ENCODE measurements at regions of chr12 and their contacts with region 1.

Region 1: GRCh38 chr12:3885277-3886094 is 12.3 kb upstream of the PARP11 start:
- DNase-seq: no peak
- ATAC-seq: peak in 1 of 4 donors; percentile 55
- H3K4me3 ChIP-seq: peak overlapping the region; percentile 33
- H3K27ac ChIP-seq: peak overlapping the region; percentile 5
- H3K4me1 ChIP-seq: no peaks in the 10 kb centered on the region
- H3K27me3 ChIP-seq: peaks cover 0 to 4% (median 3%) of the 10 kb centered on the region in 3 donors
- CTCF ChIP-seq: peak; percentile 81

Region 2: GRCh38 chr12:3832738-3833137 is 52.7 kb before region 1 on chr12:
- intact Hi-C with region 1: no loop called
- DNase-seq: no peak
- ATAC-seq: no peak
- H3K4me3 ChIP-seq: no peak overlapping the region
- H3K27ac ChIP-seq: no peak overlapping the region
- H3K4me1 ChIP-seq: no peaks in the 10 kb centered on the region
- H3K27me3 ChIP-seq: no peaks in the 10 kb centered on the region
- CTCF ChIP-seq: no peak

Region 3: DNA sequence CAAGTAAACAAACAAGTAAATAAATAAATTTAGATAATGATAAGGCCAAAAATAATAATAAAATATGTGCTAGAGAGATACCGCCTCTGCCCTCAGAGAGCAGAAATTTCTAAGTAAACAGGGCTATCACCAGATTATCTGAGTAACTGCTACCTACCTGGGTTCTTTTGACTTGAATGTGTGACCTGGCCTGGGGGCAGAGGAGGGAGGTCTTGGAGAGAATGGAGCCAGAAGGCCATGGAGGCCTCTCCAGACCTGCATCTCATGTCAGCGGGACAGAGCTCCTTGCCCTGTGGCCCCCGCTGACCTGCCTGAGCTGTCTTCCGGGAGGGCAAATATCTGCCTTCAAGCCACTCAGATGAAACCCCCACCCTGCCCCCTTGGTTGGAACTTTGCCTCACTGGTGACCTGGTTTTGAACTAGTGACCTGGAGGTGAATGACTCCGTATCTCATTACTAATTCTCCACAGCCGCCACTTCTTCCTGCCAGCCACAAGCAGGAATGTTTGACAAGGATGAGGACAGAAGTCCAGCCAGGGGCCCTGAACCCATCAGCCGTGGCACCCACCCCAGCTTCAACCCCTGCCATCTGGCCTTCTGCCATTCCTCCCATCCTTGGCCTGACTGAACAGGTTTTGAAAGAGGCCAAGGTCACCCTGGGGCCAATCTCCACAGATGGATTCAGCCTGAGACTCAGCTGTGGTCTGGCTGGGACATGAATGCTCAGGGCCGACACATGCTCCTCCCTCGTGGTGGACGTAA is 74.5 kb after region 1 on chr12:
- intact Hi-C with region 1: no loop called
- DNase-seq: no peak
- ATAC-seq: no peak
- H3K4me3 ChIP-seq: no peak overlapping the region
- H3K27ac ChIP-seq: no peak overlapping the region
- H3K4me1 ChIP-seq: no peaks in the 10 kb centered on the region
- H3K27me3 ChIP-seq: peaks cover 0 to 10% (median 3%) of the 10 kb centered on the region in 3 donors
- CTCF ChIP-seq: no peak

Region 4: GRCh38 chr12:4037747-4038312 is 152.3 kb after region 1 on chr12:
- intact Hi-C with region 1: loop called (anchors 2 to 5 kb)
- DNase-seq: no peak
- ATAC-seq: no peak
- H3K4me3 ChIP-seq: no peak overlapping the region
- H3K27ac ChIP-seq: no peak overlapping the region
- H3K4me1 ChIP-seq: no peaks in the 10 kb centered on the region
- H3K27me3 ChIP-seq: peaks cover 0 to 10% (median 0%) of the 10 kb centered on the region in 3 donors
- CTCF ChIP-seq: peak; percentile 70

Region 5: GRCh38 chr12:4538207-4539160 is 653.0 kb after region 1 on chr12 and contains the start of gene RAD51AP1:
- intact Hi-C with region 1: loop called in 1 of 2 experiments (anchors 10 kb)
- DNase-seq: peak; percentile 95 to 98
- ATAC-seq: peak; percentile 100
- H3K4me3 ChIP-seq: peak within 1 kb of the TSS; percentile 80
- H3K27ac ChIP-seq: peak within 1 kb of the TSS; percentile 95
- H3K4me1 ChIP-seq: peaks cover 9% of the 10 kb centered on the region
- H3K27me3 ChIP-seq: no peaks in the 10 kb centered on the region
- CTCF ChIP-seq: no peak
- total RNA-seq, gene RAD51AP1: 0.38 to 0.92 (median 0.44) TPM

Measured in psoas muscle (tissue), 8 donors.